ENCODE measurements at regions of chr2 and their contacts with region 1.

Region 1: GRCh38 chr2:102703748-102704147 is 58.1 kb upstream of the TMEM182 start:
- DNase-seq: no peak
- H3K4me3 ChIP-seq: no peak overlapping the region
- H3K27ac ChIP-seq: no peak overlapping the region
- H3K4me1 ChIP-seq: no peaks in the 10 kb centered on the region
- H3K27me3 ChIP-seq: peaks cover 53% of the 10 kb centered on the region
- CTCF ChIP-seq: peak; percentile 54

Region 2: DNA sequence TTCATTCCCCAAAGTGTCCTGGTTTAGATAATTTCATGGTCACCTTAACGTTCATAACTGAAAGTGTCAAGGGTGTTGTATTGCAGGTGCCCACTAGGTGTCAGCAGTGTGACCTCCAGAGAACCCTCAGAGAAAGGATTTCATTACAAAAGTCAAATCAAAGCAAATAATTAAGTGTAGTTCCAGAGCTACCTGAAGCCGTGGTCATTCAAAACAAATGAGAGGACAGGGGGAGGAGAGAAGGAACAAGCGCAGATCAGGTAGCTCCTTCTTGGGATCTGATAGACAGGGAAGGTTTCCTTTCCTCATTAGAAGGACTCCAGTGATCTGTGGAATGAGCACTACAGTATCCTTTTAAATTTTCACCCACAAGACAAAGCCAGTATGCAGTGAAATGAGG is 230.7 kb before region 1 on chr2 and contains the start of gene SLC9A4:
- intact Hi-C with region 1: loop called (anchors 2 kb)
- DNase-seq: no peak
- H3K4me3 ChIP-seq: no peak within 1 kb of the TSS
- H3K27ac ChIP-seq: no peak within 1 kb of the TSS
- H3K4me1 ChIP-seq: no peaks in the 10 kb centered on the region
- H3K27me3 ChIP-seq: peaks cover 91% of the 10 kb centered on the region
- CTCF ChIP-seq: peak; percentile 84
- total RNA-seq, gene SLC9A4: not detected

Measured in left ventricle myocardium inferior (tissue), 1 donor.